ENCODE measurements at regions of chr11 and their contacts with region 1.

Region 1: GRCh38 chr11:35013514-35014233 is 97.3 kb downstream of the PDHX start:
- DNase-seq: no peak
- H3K4me3 ChIP-seq: no peak overlapping the region
- H3K27ac ChIP-seq: no peak overlapping the region
- H3K27me3 ChIP-seq: no peaks in the 10 kb centered on the region
- CTCF ChIP-seq: no peak

Region 2: GRCh38 chr11:35065566-35065965 is 51.9 kb after region 1 on chr11:
- CTCF ChIA-PET with region 1: no interaction called
- POLR2A ChIA-PET with region 1: interaction called, 12 read pairs
- DNase-seq: no peak
- H3K4me3 ChIP-seq: no peak overlapping the region
- H3K27ac ChIP-seq: no peak overlapping the region
- H3K27me3 ChIP-seq: no peaks in the 10 kb centered on the region
- CTCF ChIP-seq: no peak